ENCODE measurements at regions of chr9 and their contacts with region 1.

Region 1: GRCh38 chr9:83334320-83334719 is 203.9 kb downstream of the FRMD3 start:
- DNase-seq: peak; percentile 81 to 88 (median 82)
- ATAC-seq: peak; percentile 96 to 99 (median 98)
- H3K4me3 ChIP-seq: no peak overlapping the region
- H3K27ac ChIP-seq: no peak overlapping the region
- H3K4me1 ChIP-seq: no peaks in the 10 kb centered on the region
- H3K27me3 ChIP-seq: no peaks in the 10 kb centered on the region
- CTCF ChIP-seq: peak; percentile 94 to 97 (median 95)
- POLR2A ChIP-seq: no peak

Region 2: GRCh38 chr9:83444110-83444509 is 109.8 kb after region 1 on chr9:
- intact Hi-C with region 1: no loop called
- DNase-seq: no peak
- ATAC-seq: peak in 1 of 4 donors; percentile 19
- H3K4me3 ChIP-seq: no peak overlapping the region
- H3K27ac ChIP-seq: no peak overlapping the region
- H3K4me1 ChIP-seq: no peaks in the 10 kb centered on the region
- H3K27me3 ChIP-seq: no peaks in the 10 kb centered on the region
- CTCF ChIP-seq: no peak
- POLR2A ChIP-seq: no peak

Region 3: GRCh38 chr9:83544002-83544698 is 209.8 kb after region 1 on chr9:
- intact Hi-C with region 1: loop called in 1 of 2 experiments (anchors 10 kb)
- DNase-seq: no peak
- ATAC-seq: peak; percentile 96 to 97 (median 96)
- H3K4me3 ChIP-seq: no peak overlapping the region
- H3K27ac ChIP-seq: no peak overlapping the region
- H3K4me1 ChIP-seq: peaks cover 0 to under 1% (median 0%) of the 10 kb centered on the region in 4 donors
- H3K27me3 ChIP-seq: no peaks in the 10 kb centered on the region
- CTCF ChIP-seq: peak; percentile 67 to 79 (median 78)
- POLR2A ChIP-seq: no peak

Region 4: GRCh38 chr9:83596896-83597504 is 262.7 kb after region 1 on chr9:
- intact Hi-C with region 1: no loop called
- DNase-seq: no peak
- ATAC-seq: peak in 1 of 4 donors; percentile 33
- H3K4me3 ChIP-seq: no peak overlapping the region
- H3K27ac ChIP-seq: no peak overlapping the region
- H3K4me1 ChIP-seq: peaks cover 0 to 13% (median 3%) of the 10 kb centered on the region in 4 donors
- H3K27me3 ChIP-seq: no peaks in the 10 kb centered on the region
- CTCF ChIP-seq: peak; percentile 34 to 73 (median 50)
- POLR2A ChIP-seq: no peak